ENCODE measurements at regions of chr10 and their contacts with region 1.

Region 1: DNA sequence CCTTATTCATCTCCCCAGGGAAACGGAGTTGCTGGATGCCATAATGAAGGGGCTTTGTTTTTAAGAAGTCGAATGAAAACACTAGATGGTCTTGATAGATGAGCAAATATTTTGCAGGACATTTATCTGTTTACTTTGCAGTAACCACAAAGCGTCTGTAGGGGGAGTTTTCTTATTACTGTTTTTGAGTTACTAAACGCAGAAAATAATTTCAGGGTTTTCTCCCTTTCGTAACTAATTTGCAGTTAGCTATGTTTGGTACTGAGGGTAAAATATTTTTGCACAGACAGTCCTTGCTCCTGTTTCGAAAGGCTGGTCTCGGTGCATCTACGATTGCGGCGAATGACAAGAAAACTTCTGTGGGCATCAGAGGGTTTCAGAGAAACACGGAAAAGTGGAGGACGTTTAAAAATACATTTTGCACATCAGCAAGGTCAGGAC is 505.6 kb upstream of the MKI67 start:
- DNase-seq: no peak

Region 2: GRCh38 chr10:128781636-128782035 is 149.8 kb after region 1 on chr10:
- intact Hi-C with region 1: no loop called
- DNase-seq: no peak

Region 3: GRCh38 chr10:128859738-128860386 is 228.0 kb after region 1 on chr10:
- intact Hi-C with region 1: loop called (anchors 5 kb)
- DNase-seq: peak in 1 of 10 donors; percentile 46